ENCODE measurements at regions of chr7 and their contacts with region 1.

Region 1: GRCh38 chr7:38368191-38368605 is 94.8 kb upstream of the TARP start:
- DNase-seq: peak; percentile 81 to 83
- H3K4me3 ChIP-seq: no peak overlapping the region
- H3K4me3 Mint-ChIP-seq: no peak overlapping the region
- H3K27ac Mint-ChIP-seq: no peak overlapping the region
- H3K4me1 ChIP-seq: no peaks in the 10 kb centered on the region
- H3K4me1 Mint-ChIP-seq: no peaks in the 10 kb centered on the region
- H3K27me3 ChIP-seq: no peaks in the 10 kb centered on the region
- H3K27me3 Mint-ChIP-seq: peaks cover 8% of the 10 kb centered on the region
- CTCF ChIP-seq: peak; percentile 60 to 69

Region 2: DNA sequence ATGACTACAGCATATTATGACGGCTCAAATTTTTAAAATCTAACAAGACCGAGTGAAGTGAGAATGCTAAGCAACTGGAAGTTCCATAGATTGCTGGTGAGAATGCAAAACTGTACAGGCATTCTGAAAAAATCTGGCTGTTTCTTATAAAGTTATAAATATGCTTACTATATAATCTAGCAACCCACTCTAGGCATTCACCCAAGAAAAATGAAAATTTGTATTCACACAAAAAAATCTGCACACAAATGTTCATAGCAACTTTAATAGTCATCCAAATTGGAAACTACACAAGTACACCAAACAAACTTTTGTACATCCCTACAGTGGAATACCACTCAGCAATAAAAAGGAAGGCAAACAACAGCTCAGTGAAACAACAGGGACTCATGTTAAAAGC is 230.0 kb before region 1 on chr7:
- CTCF ChIA-PET with region 1: no interaction called
- POLR2A ChIA-PET with region 1: no interaction called
- intact Hi-C with region 1: no loop called
- DNase-seq: no peak
- H3K4me3 ChIP-seq: no peak overlapping the region
- H3K4me3 Mint-ChIP-seq: no peak overlapping the region
- H3K27ac Mint-ChIP-seq: no peak overlapping the region
- H3K4me1 ChIP-seq: no peaks in the 10 kb centered on the region
- H3K4me1 Mint-ChIP-seq: no peaks in the 10 kb centered on the region
- H3K27me3 ChIP-seq: no peaks in the 10 kb centered on the region; the same call in 1 of the 2 replicates
- H3K27me3 Mint-ChIP-seq: peaks cover 9% of the 10 kb centered on the region
- CTCF ChIP-seq: no peak

Region 3: GRCh38 chr7:38351601-38352000 is 16.6 kb before region 1 on chr7:
- CTCF ChIA-PET with region 1: interaction called, 18 read pairs
- POLR2A ChIA-PET with region 1: no interaction called
- intact Hi-C with region 1: no loop called
- DNase-seq: no peak
- H3K4me3 ChIP-seq: no peak overlapping the region
- H3K4me3 Mint-ChIP-seq: no peak overlapping the region
- H3K27ac Mint-ChIP-seq: no peak overlapping the region
- H3K4me1 ChIP-seq: no peaks in the 10 kb centered on the region
- H3K4me1 Mint-ChIP-seq: no peaks in the 10 kb centered on the region
- H3K27me3 ChIP-seq: no peaks in the 10 kb centered on the region
- H3K27me3 Mint-ChIP-seq: peaks cover 3% of the 10 kb centered on the region
- CTCF ChIP-seq: no peak

Measured in Caco-2 (cell line).